CD4-positive, alpha-beta memory T cell (primary cell): ENCODE measurements at regions of chr1 and their contacts with region 1.

Region 1: GRCh38 chr1:91997607-91998195 is 32.1 kb upstream of the EPHX4 start:
- DNase-seq: peak; percentile 40 to 53 (median 46)
- H3K4me3 ChIP-seq: no peak overlapping the region
- H3K4me3 Mint-ChIP-seq: no peak overlapping the region
- H3K27ac ChIP-seq: no peak overlapping the region
- H3K27ac Mint-ChIP-seq: no peak overlapping the region
- H3K4me1 ChIP-seq: no peaks in the 10 kb centered on the region
- H3K4me1 Mint-ChIP-seq: no peaks in the 10 kb centered on the region
- H3K27me3 ChIP-seq: no peaks in the 10 kb centered on the region
- H3K27me3 Mint-ChIP-seq: no peaks in the 10 kb centered on the region

Region 2: GRCh38 chr1:91282695-91283420 is 714.8 kb before region 1 on chr1:
- CTCF ChIA-PET with region 1: interaction called, 4 read pairs
- POLR2A ChIA-PET with region 1: no interaction called
- intact Hi-C with region 1: loop called (anchors 10 kb)
- DNase-seq: peak; percentile 32 to 38 (median 33)
- H3K4me3 ChIP-seq: no peak overlapping the region
- H3K4me3 Mint-ChIP-seq: no peak overlapping the region
- H3K27ac ChIP-seq: no peak overlapping the region
- H3K27ac Mint-ChIP-seq: no peak overlapping the region
- H3K4me1 ChIP-seq: no peaks in the 10 kb centered on the region
- H3K4me1 Mint-ChIP-seq: no peaks in the 10 kb centered on the region
- H3K27me3 ChIP-seq: no peaks in the 10 kb centered on the region
- H3K27me3 Mint-ChIP-seq: peaks cover 3 to 9% of the 10 kb centered on the region in 2 donors

Region 3: DNA sequence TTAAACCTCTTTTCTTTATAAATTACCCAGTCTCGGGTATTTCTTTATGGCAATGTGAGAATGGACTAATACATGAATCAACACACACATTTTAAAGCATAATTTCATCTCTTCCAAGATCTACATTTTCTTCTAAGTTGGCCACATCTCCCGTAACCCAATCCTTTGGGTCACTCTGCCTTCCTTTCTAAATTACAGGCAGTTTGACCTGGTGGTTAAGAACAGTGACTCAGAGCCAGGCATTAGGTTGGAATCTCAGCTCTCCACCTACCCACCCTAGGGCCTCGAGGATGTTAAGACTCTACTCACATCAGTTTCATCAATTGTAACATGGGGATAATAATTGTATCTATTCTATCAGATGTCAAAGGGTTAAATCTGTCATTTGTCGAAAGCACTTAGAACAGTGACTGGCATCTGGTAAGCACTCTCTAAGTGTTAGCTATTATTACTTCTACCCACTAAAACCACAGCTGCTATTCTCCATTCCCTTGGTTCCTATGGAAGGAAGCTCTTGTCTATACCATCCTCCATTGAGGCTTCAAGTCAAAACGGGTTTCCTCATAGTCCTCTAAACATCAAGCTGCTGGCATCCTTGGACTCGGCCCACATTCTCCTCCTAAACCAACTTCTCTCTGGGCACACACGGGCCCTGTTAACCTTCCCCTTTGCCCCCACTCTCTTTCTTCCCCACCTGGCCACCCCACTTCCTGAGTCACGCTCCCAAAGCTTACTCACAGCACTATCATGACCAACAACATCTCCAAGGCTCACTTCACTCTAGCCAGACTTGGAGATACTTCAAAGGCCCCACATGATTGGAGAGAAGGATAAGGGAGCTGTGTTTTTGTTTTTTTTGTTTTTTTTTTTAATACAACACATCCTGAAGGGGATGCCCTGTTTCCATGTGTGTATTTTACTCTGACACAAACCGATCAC is 228.6 kb before region 1 on chr1:
- CTCF ChIA-PET with region 1: no interaction called
- POLR2A ChIA-PET with region 1: no interaction called
- intact Hi-C with region 1: no loop called
- DNase-seq: no peak
- H3K4me3 ChIP-seq: no peak overlapping the region
- H3K4me3 Mint-ChIP-seq: no peak overlapping the region
- H3K27ac ChIP-seq: no peak overlapping the region
- H3K27ac Mint-ChIP-seq: peak overlapping the region in 3 of 7 donors; percentile 1 to 24 (median 17)
- H3K4me1 ChIP-seq: no peaks in the 10 kb centered on the region
- H3K4me1 Mint-ChIP-seq: peaks cover 10 to 20% (median 14%) of the 10 kb centered on the region in 4 donors
- H3K27me3 ChIP-seq: no peaks in the 10 kb centered on the region
- H3K27me3 Mint-ChIP-seq: no peaks in the 10 kb centered on the region

Region 4: GRCh38 chr1:92291372-92291999 is 293.8 kb after region 1 on chr1:
- CTCF ChIA-PET with region 1: interaction called, 57 read pairs
- POLR2A ChIA-PET with region 1: no interaction called
- intact Hi-C with region 1: loop called (anchors 1 kb)
- DNase-seq: peak in 4 of 5 donors; percentile 13 to 32 (median 19)
- H3K4me3 ChIP-seq: no peak overlapping the region
- H3K4me3 Mint-ChIP-seq: no peak overlapping the region
- H3K27ac ChIP-seq: no peak overlapping the region
- H3K27ac Mint-ChIP-seq: peak overlapping the region in 1 of 7 donors; percentile 50
- H3K4me1 ChIP-seq: peaks cover 5% of the 10 kb centered on the region
- H3K4me1 Mint-ChIP-seq: peaks cover 12 to 21% (median 13%) of the 10 kb centered on the region in 4 donors
- H3K27me3 ChIP-seq: no peaks in the 10 kb centered on the region
- H3K27me3 Mint-ChIP-seq: no peaks in the 10 kb centered on the region

Region 5: GRCh38 chr1:92599184-92599583 is 601.5 kb after region 1 on chr1:
- CTCF ChIA-PET with region 1: interaction called, 3 read pairs
- POLR2A ChIA-PET with region 1: no interaction called
- intact Hi-C with region 1: loop called (anchors 1 kb)
- DNase-seq: peak in 4 of 5 donors; percentile 36 to 46 (median 42)
- H3K4me3 ChIP-seq: no peak overlapping the region
- H3K4me3 Mint-ChIP-seq: no peak overlapping the region
- H3K27ac ChIP-seq: no peak overlapping the region
- H3K27ac Mint-ChIP-seq: peak overlapping the region in 1 of 7 donors; percentile 25
- H3K4me1 ChIP-seq: no peaks in the 10 kb centered on the region
- H3K4me1 Mint-ChIP-seq: peaks cover 0 to 4% (median 1%) of the 10 kb centered on the region in 4 donors
- H3K27me3 ChIP-seq: no peaks in the 10 kb centered on the region
- H3K27me3 Mint-ChIP-seq: no peaks in the 10 kb centered on the region

Region 6: DNA sequence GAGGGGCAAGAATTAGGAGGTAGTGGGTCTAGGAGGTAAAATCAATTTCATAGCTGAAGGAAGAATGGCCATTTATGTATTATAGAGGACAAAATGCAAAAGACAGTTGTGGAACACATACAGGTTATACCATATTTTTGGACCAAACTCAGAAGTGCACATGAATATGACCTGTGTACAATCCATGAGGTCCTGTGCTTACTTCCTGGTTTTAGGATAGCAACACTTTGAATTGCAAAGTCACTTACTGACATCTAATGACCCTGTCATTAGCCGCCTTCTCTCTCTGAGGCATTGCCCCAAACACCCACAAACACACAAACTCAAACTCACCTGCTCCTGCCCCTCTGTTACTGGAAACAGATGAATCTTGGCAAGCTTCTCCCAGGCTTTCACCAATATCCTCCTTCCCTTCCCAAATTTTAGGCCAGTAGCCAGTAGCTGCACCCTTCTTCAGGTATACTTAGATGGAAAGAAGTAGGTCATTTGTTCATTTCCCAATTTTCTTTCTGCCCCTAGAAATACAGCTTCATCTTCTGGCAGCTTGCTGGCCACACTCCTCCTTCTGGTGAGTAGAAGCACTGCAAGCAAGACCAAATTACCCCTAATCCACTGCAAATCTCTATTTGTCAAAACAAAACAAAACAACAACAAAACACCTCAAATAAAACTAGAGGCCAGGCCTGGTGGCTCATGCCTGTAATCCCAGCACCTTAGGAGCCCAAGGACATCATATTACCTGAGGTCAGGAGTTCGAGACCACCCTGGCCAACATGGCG is 820.5 kb after region 1 on chr1:
- CTCF ChIA-PET with region 1: interaction called, 9 read pairs
- POLR2A ChIA-PET with region 1: no interaction called
- intact Hi-C with region 1: loop called (anchors 1 kb)
- DNase-seq: peak in 4 of 5 donors; percentile 16 to 43 (median 26)
- H3K4me3 ChIP-seq: no peak overlapping the region
- H3K4me3 Mint-ChIP-seq: no peak overlapping the region
- H3K27ac ChIP-seq: no peak overlapping the region
- H3K27ac Mint-ChIP-seq: peak overlapping the region in 1 of 7 donors; percentile 3
- H3K4me1 ChIP-seq: no peaks in the 10 kb centered on the region
- H3K4me1 Mint-ChIP-seq: peaks cover 0 to 3% (median 0%) of the 10 kb centered on the region in 4 donors
- H3K27me3 ChIP-seq: no peaks in the 10 kb centered on the region
- H3K27me3 Mint-ChIP-seq: peaks cover 4 to 10% of the 10 kb centered on the region in 2 donors